IMR-90 (cell line): ENCODE measurements at regions of chr12 and their contacts with region 1.

Region 1: DNA sequence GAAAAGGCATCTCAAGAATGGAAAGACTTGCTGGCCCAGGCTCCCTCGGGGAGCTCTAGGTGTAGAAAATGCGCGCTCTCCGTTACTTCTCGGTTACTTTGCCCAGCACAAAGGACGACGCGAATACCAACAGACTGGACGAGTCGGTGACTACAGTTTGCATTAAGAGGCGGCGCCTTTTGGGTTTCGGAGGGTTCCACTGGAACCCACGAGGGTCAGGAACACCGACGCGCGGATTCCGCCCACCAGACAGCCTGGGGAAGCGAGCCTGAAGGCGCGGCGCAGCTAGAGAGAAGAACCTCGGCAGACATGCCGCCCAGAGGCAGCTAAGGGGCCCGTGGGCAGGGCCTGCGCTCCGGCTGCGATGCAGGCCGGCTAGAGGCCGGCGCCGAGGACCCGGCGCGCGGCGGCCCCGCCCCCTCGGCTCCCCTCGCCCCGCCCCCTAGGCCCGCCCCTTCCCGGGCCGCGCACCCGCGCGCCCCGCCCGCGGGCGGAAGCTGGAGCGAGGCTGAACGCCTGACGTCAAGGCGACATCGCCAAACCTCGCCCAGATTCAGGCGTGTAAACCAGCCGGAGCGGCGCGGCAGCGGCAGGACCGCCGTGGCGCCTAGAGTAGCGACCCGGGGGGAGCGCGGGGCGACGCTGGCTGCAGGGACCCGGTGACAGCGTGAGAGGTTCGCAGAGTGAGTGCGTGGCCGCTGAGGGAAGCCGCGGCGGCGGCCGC is at the start of gene RAP1B:
- DNase-seq: peak; percentile 90
- ATAC-seq: peak; percentile 95
- H3K4me3 ChIP-seq: peak within 1 kb of the TSS; percentile 86
- H3K27ac ChIP-seq: peak within 1 kb of the TSS; percentile 100
- H3K4me1 ChIP-seq: no peaks in the 10 kb centered on the region
- H3K27me3 ChIP-seq: no peaks in the 10 kb centered on the region
- CTCF ChIP-seq: no peak
- POLR2A ChIP-seq: peak; percentile 96
- RAD21 ChIP-seq: peak; percentile 8; the same call in 1 of the 2 replicates
- total RNA-seq, gene RAP1B: 200 and 262 TPM in 2 replicates

Region 2: DNA sequence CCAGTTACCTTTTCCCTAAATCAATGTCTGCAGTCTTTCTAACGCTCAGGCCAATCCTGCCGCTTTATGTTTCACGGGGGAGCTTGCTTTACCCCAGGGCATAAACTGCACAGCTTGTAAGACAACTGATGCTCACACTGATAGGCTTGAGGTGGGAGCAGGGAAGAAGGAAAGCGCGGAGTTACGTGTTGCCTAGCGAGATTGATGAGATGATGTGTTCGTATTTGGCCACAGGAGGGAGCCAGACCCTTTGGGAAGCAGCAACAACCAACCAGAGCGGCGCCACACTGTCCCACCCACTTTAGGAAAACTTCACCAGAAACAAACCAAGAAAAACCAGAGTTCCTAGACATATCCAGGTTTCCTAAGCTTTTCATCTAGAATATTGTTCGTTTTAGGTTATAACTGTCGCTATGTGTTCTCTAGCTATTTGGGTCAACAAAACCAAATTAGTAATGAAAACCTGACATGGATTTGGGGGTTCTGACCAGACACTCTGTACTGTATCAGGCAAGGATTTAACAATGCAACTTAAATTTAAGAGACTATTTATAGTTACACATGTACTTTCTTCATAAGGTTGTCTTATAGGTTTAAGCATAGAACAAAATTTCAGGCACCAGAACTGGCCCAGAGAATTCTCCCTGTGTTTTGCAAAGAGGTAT is 387.3 kb before region 1 on chr12:
- CTCF ChIA-PET with region 1: no interaction called
- POLR2A ChIA-PET with region 1: no interaction called
- dilution Hi-C with region 1: no loop called
- in situ Hi-C with region 1: no loop called
- intact Hi-C with region 1: loop called (anchors 5 kb)
- DNase-seq: peak; percentile 89
- ATAC-seq: peak; percentile 97
- H3K4me3 ChIP-seq: peak overlapping the region; percentile 17; the same call in 1 of the 2 replicates
- H3K27ac ChIP-seq: no peak overlapping the region
- H3K4me1 ChIP-seq: peaks cover 2% of the 10 kb centered on the region; the same call in 1 of the 2 replicates
- H3K27me3 ChIP-seq: no peaks in the 10 kb centered on the region
- CTCF ChIP-seq: peak; percentile 95
- POLR2A ChIP-seq: 0 out of 2 replicates have a peak, but pooled peaks have one; percentile 46
- RAD21 ChIP-seq: peak; percentile 99

Region 3: DNA sequence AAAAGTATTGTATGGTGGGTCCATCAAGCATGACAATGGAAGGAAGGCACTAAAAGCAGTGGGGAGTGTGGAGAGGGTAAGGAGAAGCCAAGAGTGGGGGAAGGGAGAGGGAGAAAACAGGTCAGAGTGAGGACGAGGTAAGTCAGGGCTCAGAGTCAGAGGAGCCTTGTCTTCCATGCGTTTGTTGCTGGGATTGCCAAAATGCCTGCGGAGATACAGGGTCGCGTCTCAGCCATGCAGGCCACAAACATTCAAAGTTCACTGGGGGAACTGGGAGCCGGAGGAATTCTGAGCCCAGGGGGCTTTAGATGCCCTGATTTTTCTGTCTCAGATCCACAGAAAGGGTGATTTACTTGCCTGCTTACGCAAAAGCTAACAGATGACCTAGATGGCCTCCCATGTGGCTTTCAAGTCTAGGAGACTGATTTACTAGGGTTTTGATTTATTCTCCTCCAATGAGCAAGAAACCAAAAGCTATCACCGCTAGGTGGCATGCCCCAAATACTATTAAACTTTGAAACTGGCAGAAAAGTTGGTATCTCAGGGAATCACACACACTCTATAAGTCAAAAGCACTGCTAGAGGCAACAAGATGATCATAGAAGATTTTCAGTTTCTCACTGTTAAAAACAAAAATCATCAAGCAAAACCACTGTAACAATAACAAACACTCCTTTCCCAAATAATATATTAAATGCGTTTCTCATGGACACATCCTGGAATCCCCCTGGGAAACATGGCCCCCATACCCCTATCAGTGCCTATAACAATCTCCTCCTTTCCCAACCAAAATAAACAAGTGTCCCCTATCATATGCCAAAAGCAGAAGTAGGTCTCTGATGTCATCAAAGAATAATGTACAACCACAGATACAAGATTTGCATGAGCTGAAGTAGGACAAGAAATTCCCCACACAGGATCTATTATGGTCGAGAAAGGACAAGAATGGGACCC is 251.7 kb before region 1 on chr12:
- CTCF ChIA-PET with region 1: interaction called, 3 read pairs
- POLR2A ChIA-PET with region 1: no interaction called
- dilution Hi-C with region 1: no loop called
- in situ Hi-C with region 1: loop called (anchors 10 kb)
- intact Hi-C with region 1: loop called (anchors 1 kb)
- DNase-seq: peak; percentile 82
- ATAC-seq: peak; percentile 93
- H3K4me3 ChIP-seq: no peak overlapping the region
- H3K27ac ChIP-seq: no peak overlapping the region
- H3K4me1 ChIP-seq: peaks cover 9% of the 10 kb centered on the region
- H3K27me3 ChIP-seq: no peaks in the 10 kb centered on the region
- CTCF ChIP-seq: peak; percentile 75
- POLR2A ChIP-seq: no peak
- RAD21 ChIP-seq: peak; percentile 76

Region 4: DNA sequence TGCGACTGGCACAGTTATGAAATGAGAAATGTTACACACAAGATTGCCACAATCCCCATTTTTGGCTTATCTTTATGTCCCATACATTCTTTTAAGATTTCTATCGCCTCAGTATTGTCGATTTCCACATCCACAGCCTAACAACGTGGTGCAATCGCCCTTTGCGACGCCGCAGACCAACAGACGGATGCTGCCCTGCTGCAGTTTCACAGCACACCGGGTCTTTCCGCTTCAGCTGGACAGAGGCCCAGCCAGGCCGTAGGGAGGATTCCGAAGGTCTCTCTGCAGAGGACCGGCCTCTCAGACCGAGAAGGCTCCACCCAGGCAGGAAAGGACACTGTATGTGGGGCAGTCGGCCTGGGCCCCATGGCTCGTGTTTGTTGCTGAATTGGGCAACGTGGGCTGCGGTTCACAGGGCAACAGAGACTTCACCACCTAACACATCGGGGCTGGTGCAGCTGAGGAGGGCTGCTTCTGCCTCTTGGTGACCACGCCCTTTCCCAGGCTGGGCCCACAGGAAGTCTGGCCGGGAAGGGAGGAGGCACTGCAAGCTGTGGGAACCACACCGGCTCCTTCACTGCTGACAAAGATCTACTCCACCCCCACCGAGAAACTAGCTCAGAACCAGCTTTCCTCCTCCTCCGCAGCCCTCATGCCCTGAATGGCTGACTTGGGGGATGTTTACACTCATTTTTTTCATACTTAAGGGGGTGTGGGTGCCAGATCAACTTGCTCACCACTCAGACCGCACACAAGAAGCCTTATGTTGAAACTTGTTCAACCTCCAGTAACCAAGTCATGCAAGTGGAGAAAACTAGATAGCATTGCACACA is 245.4 kb before region 1 on chr12:
- CTCF ChIA-PET with region 1: no interaction called
- POLR2A ChIA-PET with region 1: no interaction called
- dilution Hi-C with region 1: no loop called
- in situ Hi-C with region 1: loop called (anchors 10 kb)
- intact Hi-C with region 1: loop called (anchors 1 kb)
- DNase-seq: peak; percentile 98
- ATAC-seq: peak; percentile 97
- H3K4me3 ChIP-seq: peak overlapping the region; percentile 45
- H3K27ac ChIP-seq: peak overlapping the region; percentile 92
- H3K4me1 ChIP-seq: peaks cover 8% of the 10 kb centered on the region
- H3K27me3 ChIP-seq: no peaks in the 10 kb centered on the region
- CTCF ChIP-seq: no peak
- POLR2A ChIP-seq: no peak; the same call in none of the 2 replicates
- RAD21 ChIP-seq: peak; percentile 39

Region 5: GRCh38 chr12:68406134-68406594 is 204.4 kb before region 1 on chr12:
- CTCF ChIA-PET with region 1: interaction called, 4 read pairs
- POLR2A ChIA-PET with region 1: no interaction called
- dilution Hi-C with region 1: no loop called
- in situ Hi-C with region 1: no loop called
- intact Hi-C with region 1: loop called (anchors 1 kb)
- DNase-seq: peak; percentile 82
- ATAC-seq: peak; percentile 91
- H3K4me3 ChIP-seq: no peak overlapping the region
- H3K27ac ChIP-seq: no peak overlapping the region; the same call in 1 of the 2 replicates
- H3K4me1 ChIP-seq: peaks cover 5% of the 10 kb centered on the region
- H3K27me3 ChIP-seq: no peaks in the 10 kb centered on the region
- CTCF ChIP-seq: peak; percentile 41
- POLR2A ChIP-seq: no peak
- RAD21 ChIP-seq: peak; percentile 44

Region 6: GRCh38 chr12:68565375-68565903 is 45.1 kb before region 1 on chr12:
- CTCF ChIA-PET with region 1: no interaction called
- POLR2A ChIA-PET with region 1: no interaction called
- dilution Hi-C with region 1: no loop called
- in situ Hi-C with region 1: no loop called
- intact Hi-C with region 1: no loop called
- DNase-seq: peak; percentile 88
- ATAC-seq: peak; percentile 81
- H3K4me3 ChIP-seq: no peak overlapping the region
- H3K27ac ChIP-seq: no peak overlapping the region
- H3K4me1 ChIP-seq: peaks cover 4% of the 10 kb centered on the region
- H3K27me3 ChIP-seq: no peaks in the 10 kb centered on the region
- CTCF ChIP-seq: no peak
- POLR2A ChIP-seq: no peak
- RAD21 ChIP-seq: no peak

Region 7: GRCh38 chr12:68686595-68687521 is 76.3 kb after region 1 on chr12 and contains the start of gene NUP107:
- CTCF ChIA-PET with region 1: no interaction called
- POLR2A ChIA-PET with region 1: no interaction called
- dilution Hi-C with region 1: no loop called
- in situ Hi-C with region 1: no loop called
- intact Hi-C with region 1: loop called (anchors 2 kb)
- DNase-seq: peak; percentile 99
- ATAC-seq: peak; percentile 96
- H3K4me3 ChIP-seq: peak within 1 kb of the TSS; percentile 66
- H3K27ac ChIP-seq: peak within 1 kb of the TSS; percentile 45
- H3K4me1 ChIP-seq: no peaks in the 10 kb centered on the region; the same call in 1 of the 2 replicates
- H3K27me3 ChIP-seq: no peaks in the 10 kb centered on the region
- CTCF ChIP-seq: peak; percentile 36; the same call in 1 of the 2 replicates
- POLR2A ChIP-seq: peak; percentile 66
- RAD21 ChIP-seq: 0 out of 2 replicates have a peak, but pooled peaks have one; percentile 23
- total RNA-seq, gene NUP107: 54.4 and 69.7 TPM in 2 replicates

Region 8: GRCh38 chr12:68815232-68815927 is 204.8 kb after region 1 on chr12:
- CTCF ChIA-PET with region 1: no interaction called
- POLR2A ChIA-PET with region 1: no interaction called
- dilution Hi-C with region 1: no loop called
- in situ Hi-C with region 1: no loop called
- intact Hi-C with region 1: no loop called
- DNase-seq: no peak
- ATAC-seq: no peak
- H3K4me3 ChIP-seq: no peak overlapping the region
- H3K27ac ChIP-seq: no peak overlapping the region
- H3K4me1 ChIP-seq: peaks cover 2% of the 10 kb centered on the region; the same call in 1 of the 2 replicates
- H3K27me3 ChIP-seq: no peaks in the 10 kb centered on the region
- CTCF ChIP-seq: no peak
- POLR2A ChIP-seq: no peak
- RAD21 ChIP-seq: no peak